Activated naive CD4-positive, alpha-beta T cell treated with anti-CD3 and anti-CD28 coated beads for 36 hours (primary cell): ENCODE measurements at regions of chr19 and their contacts with region 1.

Region 1: GRCh38 chr19:21020298-21021227 is at the start of gene ZNF430:
- DNase-seq: peak; percentile 98
- H3K4me3 Mint-ChIP-seq: peak within 1 kb of the TSS; percentile 98
- H3K27ac Mint-ChIP-seq: peak within 1 kb of the TSS; percentile 98
- H3K4me1 Mint-ChIP-seq: peaks cover 42% of the 10 kb centered on the region
- H3K27me3 Mint-ChIP-seq: no peaks in the 10 kb centered on the region
- total RNA-seq, gene ZNF430: 18.2 to 19.5 TPM

Region 2: DNA sequence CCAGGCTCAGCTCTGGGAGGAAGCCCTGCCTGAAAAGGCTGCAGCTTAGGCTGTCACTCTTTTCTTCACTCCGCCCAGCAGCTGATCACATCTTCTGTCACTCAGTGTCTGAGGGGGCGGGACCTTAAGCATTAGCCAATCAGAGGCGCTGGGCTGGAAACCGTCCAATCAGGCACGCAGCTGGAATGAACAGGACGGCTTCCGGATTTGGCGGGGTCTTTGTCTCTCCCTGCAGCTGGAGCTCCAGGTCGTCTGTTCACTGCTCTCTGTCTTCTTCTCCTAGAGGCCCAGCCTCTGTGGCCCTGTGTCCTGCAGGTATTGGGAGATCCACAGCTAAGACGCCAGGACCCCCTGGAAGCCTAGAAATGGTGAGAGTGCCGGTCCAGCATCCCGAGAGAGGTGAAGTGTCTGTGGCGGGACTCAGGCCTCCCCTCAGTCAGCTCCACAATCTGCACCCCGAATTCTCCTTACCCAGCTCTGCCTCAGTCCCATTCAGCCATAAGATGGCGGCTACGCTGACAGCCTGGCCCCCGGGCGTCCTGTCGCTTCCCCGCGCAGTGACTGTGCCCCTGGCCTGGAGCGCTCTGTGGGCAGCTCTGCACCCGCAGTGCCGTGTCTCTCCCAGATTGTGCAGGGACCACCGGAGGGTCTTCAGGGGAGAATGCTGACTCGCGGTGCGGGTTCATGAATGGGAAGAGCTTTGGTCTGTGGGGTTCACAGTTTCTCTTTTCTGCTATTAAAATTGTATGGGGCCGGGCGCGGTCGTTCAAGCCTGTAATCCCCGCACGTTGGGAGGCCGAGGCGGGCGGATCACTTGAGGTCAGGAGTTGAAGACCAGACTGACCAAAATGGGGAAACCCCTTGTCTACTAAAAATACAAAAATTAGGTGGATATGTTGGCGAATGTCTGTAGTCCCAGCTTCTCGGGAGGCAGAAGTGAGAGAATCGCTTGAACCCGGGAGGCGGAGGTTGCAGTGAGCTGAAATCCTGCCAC is 244.2 kb before region 1 on chr19 and contains the start of gene ZNF66:
- CTCF ChIA-PET with region 1: no interaction called
- intact Hi-C with region 1: loop called (anchors 5 kb)
- DNase-seq: peak; percentile 98
- H3K4me3 Mint-ChIP-seq: peak within 1 kb of the TSS; percentile 100
- H3K27ac Mint-ChIP-seq: peak within 1 kb of the TSS; percentile 95
- H3K4me1 Mint-ChIP-seq: peaks cover 18% of the 10 kb centered on the region
- H3K27me3 Mint-ChIP-seq: no peaks in the 10 kb centered on the region
- total RNA-seq, gene ZNF66: 3.9 to 4.9 TPM

Region 3: GRCh38 chr19:21045028-21045427 is 24.5 kb after region 1 on chr19:
- CTCF ChIA-PET with region 1: no interaction called
- intact Hi-C with region 1: no loop called
- DNase-seq: no peak
- H3K4me3 Mint-ChIP-seq: no peak overlapping the region
- H3K27ac Mint-ChIP-seq: no peak overlapping the region
- H3K4me1 Mint-ChIP-seq: peaks cover 9% of the 10 kb centered on the region
- H3K27me3 Mint-ChIP-seq: no peaks in the 10 kb centered on the region

Region 4: GRCh38 chr19:21082011-21082975 is 61.7 kb after region 1 on chr19 and contains the start of gene ZNF714:
- CTCF ChIA-PET with region 1: no interaction called
- intact Hi-C with region 1: loop called (anchors 1 kb)
- DNase-seq: peak; percentile 93
- H3K4me3 Mint-ChIP-seq: peak within 1 kb of the TSS; percentile 98
- H3K27ac Mint-ChIP-seq: peak within 1 kb of the TSS; percentile 95
- H3K4me1 Mint-ChIP-seq: peaks cover 29% of the 10 kb centered on the region
- H3K27me3 Mint-ChIP-seq: no peaks in the 10 kb centered on the region
- total RNA-seq, gene ZNF714: 21.1 to 23.1 TPM

Region 5: GRCh38 chr19:21568816-21569493 is 548.4 kb after region 1 on chr19:
- CTCF ChIA-PET with region 1: no interaction called
- intact Hi-C with region 1: loop called (anchors 5 kb)
- DNase-seq: peak; percentile 94
- H3K4me3 Mint-ChIP-seq: peak overlapping the region; percentile 99
- H3K27ac Mint-ChIP-seq: peak overlapping the region; percentile 99
- H3K4me1 Mint-ChIP-seq: peaks cover 30% of the 10 kb centered on the region
- H3K27me3 Mint-ChIP-seq: no peaks in the 10 kb centered on the region